Activated naive CD4-positive, alpha-beta T cell treated with anti-CD3 and anti-CD28 coated beads for 36 hours (primary cell): ENCODE measurements at regions of chr15 and their contacts with region 1.

Region 1: GRCh38 chr15:89278307-89278706 is 34.5 kb downstream of the FANCI start:
- DNase-seq: no peak
- H3K4me3 Mint-ChIP-seq: no peak overlapping the region
- H3K27ac Mint-ChIP-seq: no peak overlapping the region
- H3K4me1 Mint-ChIP-seq: peaks cover 13% of the 10 kb centered on the region
- H3K27me3 Mint-ChIP-seq: no peaks in the 10 kb centered on the region

Region 2: GRCh38 chr15:89293012-89293411 is 14.7 kb after region 1 on chr15:
- CTCF ChIA-PET with region 1: no interaction called
- intact Hi-C with region 1: loop called (anchors 1 kb)
- DNase-seq: no peak
- H3K4me3 Mint-ChIP-seq: no peak overlapping the region
- H3K27ac Mint-ChIP-seq: no peak overlapping the region
- H3K4me1 Mint-ChIP-seq: no peaks in the 10 kb centered on the region
- H3K27me3 Mint-ChIP-seq: no peaks in the 10 kb centered on the region

Region 3: DNA sequence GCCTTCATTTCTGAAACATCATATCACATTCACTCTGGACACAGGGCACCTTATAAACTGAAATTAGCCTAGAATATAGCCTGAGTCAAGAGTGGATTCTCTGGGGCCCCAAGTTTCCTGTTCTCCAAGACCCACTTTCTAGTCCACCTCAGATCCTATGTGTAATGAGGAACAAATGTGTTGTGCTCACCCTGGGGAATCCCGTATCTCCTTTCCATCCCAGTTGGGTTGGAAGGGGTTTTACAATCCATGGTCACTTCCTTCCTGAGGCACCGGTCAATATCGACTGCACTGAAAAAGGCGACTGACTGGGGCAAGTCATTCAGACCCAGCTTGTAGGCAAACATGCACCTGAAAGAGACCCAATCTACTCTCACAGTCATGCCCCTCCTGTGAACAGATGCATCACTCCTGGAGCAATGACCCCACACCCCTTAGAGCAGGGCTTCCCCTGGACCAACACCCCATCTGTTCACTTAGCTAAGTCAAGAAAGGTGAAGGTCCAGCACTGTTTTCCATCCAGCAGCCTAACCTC is 38.9 kb after region 1 on chr15:
- CTCF ChIA-PET with region 1: no interaction called
- intact Hi-C with region 1: loop called (anchors 5 kb)
- DNase-seq: no peak
- H3K4me3 Mint-ChIP-seq: no peak overlapping the region
- H3K27ac Mint-ChIP-seq: peak overlapping the region; percentile 80
- H3K4me1 Mint-ChIP-seq: peaks cover 24% of the 10 kb centered on the region
- H3K27me3 Mint-ChIP-seq: no peaks in the 10 kb centered on the region